BJ (cell line): ENCODE measurements at regions of chr6 and their contacts with region 1.

Region 1: GRCh38 chr6:140078561-140079125 is 704.2 kb upstream of the CITED2 start:
- DNase-seq: peak; percentile 94
- H3K4me3 ChIP-seq: no peak overlapping the region
- H3K27me3 ChIP-seq: no peaks in the 10 kb centered on the region
- CTCF ChIP-seq: no peak

Region 2: GRCh38 chr6:139943391-139943790 is 135.3 kb before region 1 on chr6:
- CTCF ChIA-PET with region 1: no interaction called
- POLR2A ChIA-PET with region 1: interaction called, 13 read pairs
- DNase-seq: peak; percentile 91
- H3K4me3 ChIP-seq: no peak overlapping the region
- H3K27me3 ChIP-seq: no peaks in the 10 kb centered on the region
- CTCF ChIP-seq: no peak

Region 3: DNA sequence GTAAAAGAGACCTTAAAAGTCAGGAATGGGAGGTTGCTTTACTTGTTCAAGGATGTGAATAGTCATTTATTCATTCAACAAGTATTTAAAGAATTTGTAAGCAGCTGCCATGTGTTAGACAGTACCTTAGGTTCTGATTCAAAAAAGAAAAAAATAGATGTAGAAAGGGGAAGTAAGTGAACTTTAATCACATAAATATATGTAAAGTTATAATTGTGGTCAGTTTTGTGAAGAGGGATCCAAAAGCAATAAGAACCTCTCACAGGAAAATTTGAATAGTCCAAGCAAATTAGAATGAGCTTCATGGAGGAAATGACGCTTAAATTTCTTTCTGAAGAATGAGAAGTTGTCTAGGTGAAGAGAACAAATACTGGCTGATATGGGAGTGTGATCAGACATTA is 108.1 kb before region 1 on chr6:
- CTCF ChIA-PET with region 1: no interaction called
- POLR2A ChIA-PET with region 1: interaction called, 22 read pairs
- DNase-seq: no peak
- H3K4me3 ChIP-seq: no peak overlapping the region
- H3K27me3 ChIP-seq: no peaks in the 10 kb centered on the region
- CTCF ChIP-seq: no peak

Region 4: DNA sequence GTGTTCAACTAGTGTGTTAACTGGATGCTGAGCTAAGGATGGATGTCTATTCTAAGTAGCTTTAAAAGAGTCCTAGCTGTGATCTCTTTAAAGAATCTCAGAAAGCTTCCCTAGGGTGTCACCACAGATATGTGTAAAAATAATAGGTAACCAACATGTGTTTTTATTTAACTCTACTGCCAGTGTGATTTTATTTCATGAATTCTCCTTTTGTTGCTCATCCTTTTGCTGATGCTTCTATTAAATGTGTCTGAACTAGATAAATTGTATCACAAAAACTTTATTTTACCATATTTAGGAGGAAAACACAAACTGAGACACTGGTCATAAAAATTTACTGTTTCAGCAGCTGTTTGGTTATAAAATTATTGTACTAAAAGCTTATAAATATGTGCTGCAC is 105.2 kb after region 1 on chr6:
- CTCF ChIA-PET with region 1: no interaction called
- POLR2A ChIA-PET with region 1: interaction called, 12 read pairs
- DNase-seq: peak; percentile 91
- H3K4me3 ChIP-seq: no peak overlapping the region
- H3K27me3 ChIP-seq: no peaks in the 10 kb centered on the region
- CTCF ChIP-seq: no peak

Region 5: DNA sequence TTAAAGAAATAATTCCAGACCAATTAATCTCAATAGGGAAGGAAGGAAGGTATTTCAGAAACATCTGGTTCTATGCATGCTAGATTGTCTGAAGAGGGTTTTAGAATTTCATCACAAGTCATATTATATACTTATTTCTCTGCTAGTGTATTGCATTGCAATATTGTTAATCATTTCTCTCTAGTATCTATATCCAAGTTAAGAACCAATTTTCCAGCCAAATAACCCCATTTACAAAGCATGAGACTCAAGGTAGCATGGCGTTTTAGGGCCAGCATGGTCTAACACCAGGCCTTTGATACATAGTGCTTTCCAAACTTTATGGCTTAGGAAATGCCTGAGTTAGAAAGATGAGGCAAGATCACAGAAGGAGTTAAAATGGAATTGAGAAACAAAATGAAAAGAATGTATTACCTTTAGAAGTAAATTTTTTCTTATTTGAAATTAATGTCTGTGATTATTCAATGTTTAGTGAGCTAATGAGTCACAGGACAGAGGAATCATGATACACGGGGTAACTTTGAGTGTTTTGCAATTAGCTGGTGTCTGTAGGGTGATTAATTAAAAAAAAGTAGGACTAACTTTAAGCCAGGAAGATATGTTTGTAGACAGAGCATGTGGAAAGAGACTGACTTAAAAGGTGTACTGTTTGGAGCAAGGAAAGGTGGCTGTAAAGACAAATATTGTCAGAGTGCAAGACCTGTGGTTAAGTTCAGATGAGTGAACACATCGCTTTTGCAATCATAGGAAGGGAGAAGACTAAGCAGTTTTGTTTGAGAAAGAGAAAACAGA is 302.0 kb after region 1 on chr6:
- CTCF ChIA-PET with region 1: interaction called, 3 read pairs
- POLR2A ChIA-PET with region 1: interaction called, 11 read pairs
- DNase-seq: no peak
- H3K4me3 ChIP-seq: no peak overlapping the region
- H3K27me3 ChIP-seq: no peaks in the 10 kb centered on the region
- CTCF ChIP-seq: no peak